ENCODE measurements at regions of chr7 and their contacts with region 1.

Region 1: DNA sequence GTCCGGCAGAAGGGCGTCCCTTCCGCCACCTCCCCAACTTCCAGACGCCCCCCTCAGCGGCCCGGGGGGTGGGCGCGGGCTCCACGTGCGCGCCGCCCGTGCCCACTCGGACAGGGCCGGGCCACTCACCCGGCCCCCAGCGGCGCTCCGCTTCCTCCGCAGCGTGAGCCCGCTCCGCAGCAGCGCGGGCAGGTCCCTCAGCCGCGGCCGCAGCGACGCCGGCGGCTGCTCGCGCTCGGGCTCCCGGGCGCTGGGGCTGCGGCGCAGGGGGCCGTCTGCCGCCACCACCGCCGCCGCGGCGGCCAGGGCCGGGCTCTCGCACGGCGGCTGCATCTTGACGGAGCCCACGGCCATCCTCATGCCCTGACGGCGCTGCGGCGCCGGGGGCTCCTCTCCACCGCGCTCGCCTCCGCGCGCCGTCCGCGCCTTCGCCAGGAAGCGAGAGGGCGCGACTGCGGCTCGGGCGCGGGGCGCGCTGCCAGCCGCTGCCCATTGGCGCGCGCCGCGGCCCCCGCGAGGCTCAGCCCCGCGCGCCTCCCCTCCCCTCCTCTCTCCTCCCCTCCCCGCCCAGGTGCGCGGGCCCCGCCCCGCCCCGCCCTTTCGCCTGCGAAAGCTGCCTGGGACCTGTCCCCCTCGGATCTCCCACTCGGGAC is at the start of gene RAPGEF5:
- DNase-seq: peak; percentile 66
- H3K4me3 ChIP-seq: peak within 1 kb of the TSS; percentile 63 to 69 (median 66)
- H3K27ac ChIP-seq: peak within 1 kb of the TSS; percentile 76
- H3K4me1 ChIP-seq: peaks cover 20% of the 10 kb centered on the region
- H3K27me3 ChIP-seq: no peaks in the 10 kb centered on the region
- CTCF ChIP-seq: no peak
- total RNA-seq, gene RAPGEF5: 6.0 to 7.1 TPM

Region 2: DNA sequence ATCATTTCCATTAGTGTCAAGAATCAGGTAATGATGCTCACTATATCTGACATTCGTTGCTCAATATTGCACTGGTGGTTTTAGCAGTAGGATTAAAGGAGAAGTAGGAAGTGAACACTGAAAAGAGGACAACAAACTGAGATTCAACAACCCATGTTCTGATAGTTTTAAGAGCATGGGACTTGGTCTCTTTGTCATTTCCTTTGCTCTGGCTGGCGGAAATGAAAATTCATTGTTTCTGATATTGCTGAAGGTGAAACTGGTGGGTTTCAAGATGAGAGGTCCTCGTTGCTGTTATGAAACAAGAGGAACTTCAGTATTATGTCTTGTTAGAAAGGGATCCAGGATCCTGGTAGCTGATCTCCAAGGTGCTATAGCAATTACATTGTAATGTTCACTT is 685.0 kb before region 1 on chr7:
- CTCF ChIA-PET with region 1: no interaction called
- dilution Hi-C with region 1: no loop called
- in situ Hi-C with region 1: no loop called
- intact Hi-C with region 1: no loop called
- DNase-seq: no peak
- H3K4me3 ChIP-seq: no peak overlapping the region
- H3K27ac ChIP-seq: no peak overlapping the region
- H3K4me1 ChIP-seq: no peaks in the 10 kb centered on the region
- H3K27me3 ChIP-seq: no peaks in the 10 kb centered on the region
- CTCF ChIP-seq: no peak

Region 3: GRCh38 chr7:22430457-22430856 is 73.6 kb after region 1 on chr7:
- CTCF ChIA-PET with region 1: no interaction called
- dilution Hi-C with region 1: no loop called
- in situ Hi-C with region 1: no loop called
- intact Hi-C with region 1: loop called (anchors 1 kb)
- DNase-seq: peak; percentile 97
- H3K4me3 ChIP-seq: no peak overlapping the region
- H3K27ac ChIP-seq: peak overlapping the region; percentile 81
- H3K4me1 ChIP-seq: peaks cover 49% of the 10 kb centered on the region
- H3K27me3 ChIP-seq: no peaks in the 10 kb centered on the region
- CTCF ChIP-seq: no peak

Region 4: GRCh38 chr7:22445140-22445743 is 88.4 kb after region 1 on chr7:
- CTCF ChIA-PET with region 1: no interaction called
- dilution Hi-C with region 1: no loop called
- in situ Hi-C with region 1: loop called in 1 of 2 experiments (anchors 10 kb)
- intact Hi-C with region 1: no loop called
- DNase-seq: peak; percentile 65
- H3K4me3 ChIP-seq: no peak overlapping the region
- H3K27ac ChIP-seq: peak overlapping the region; percentile 50
- H3K4me1 ChIP-seq: peaks cover 22% of the 10 kb centered on the region
- H3K27me3 ChIP-seq: no peaks in the 10 kb centered on the region
- CTCF ChIP-seq: no peak

Region 5: DNA sequence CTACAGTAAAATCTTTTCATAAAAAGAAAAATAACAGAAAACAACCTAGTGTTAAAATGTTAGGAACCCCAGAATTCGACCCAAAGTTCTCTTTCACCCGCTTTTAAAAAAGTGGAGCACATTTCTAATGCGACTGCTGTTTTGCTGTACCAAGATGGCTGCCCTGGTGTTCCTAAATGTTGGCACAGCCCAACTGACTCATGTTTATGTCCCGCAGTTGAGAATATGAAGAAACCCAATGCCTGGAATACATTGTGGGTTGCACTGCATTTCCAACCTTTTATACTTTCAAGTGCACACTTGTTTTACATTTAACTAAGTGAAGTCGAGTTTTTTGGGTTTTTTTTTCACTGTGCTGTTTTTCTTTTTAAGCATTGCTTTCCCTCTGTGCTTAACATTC is 142.2 kb after region 1 on chr7:
- CTCF ChIA-PET with region 1: interaction called, 11 read pairs
- dilution Hi-C with region 1: no loop called
- in situ Hi-C with region 1: no loop called
- intact Hi-C with region 1: no loop called
- DNase-seq: no peak
- H3K4me3 ChIP-seq: no peak overlapping the region
- H3K27ac ChIP-seq: no peak overlapping the region
- H3K4me1 ChIP-seq: peaks cover 3% of the 10 kb centered on the region
- H3K27me3 ChIP-seq: no peaks in the 10 kb centered on the region
- CTCF ChIP-seq: no peak